Aorta (tissue), 5 donors: ENCODE measurements at regions of chr4 and their contacts with region 1.

Region 1: GRCh38 chr4:122827879-122828601 is 1.4 kb downstream of the FGF2 start:
- DNase-seq: peak in 1 of 2 donors; percentile 55
- ATAC-seq: peak; percentile 68
- H3K4me3 ChIP-seq: peak overlapping the region; percentile 83 to 94
- H3K27ac ChIP-seq: peak overlapping the region in 1 of 2 donors; percentile 80
- H3K4me1 ChIP-seq: peaks cover 5 to 11% of the 10 kb centered on the region in 2 donors
- H3K27me3 ChIP-seq: no peaks in the 10 kb centered on the region

Region 2: DNA sequence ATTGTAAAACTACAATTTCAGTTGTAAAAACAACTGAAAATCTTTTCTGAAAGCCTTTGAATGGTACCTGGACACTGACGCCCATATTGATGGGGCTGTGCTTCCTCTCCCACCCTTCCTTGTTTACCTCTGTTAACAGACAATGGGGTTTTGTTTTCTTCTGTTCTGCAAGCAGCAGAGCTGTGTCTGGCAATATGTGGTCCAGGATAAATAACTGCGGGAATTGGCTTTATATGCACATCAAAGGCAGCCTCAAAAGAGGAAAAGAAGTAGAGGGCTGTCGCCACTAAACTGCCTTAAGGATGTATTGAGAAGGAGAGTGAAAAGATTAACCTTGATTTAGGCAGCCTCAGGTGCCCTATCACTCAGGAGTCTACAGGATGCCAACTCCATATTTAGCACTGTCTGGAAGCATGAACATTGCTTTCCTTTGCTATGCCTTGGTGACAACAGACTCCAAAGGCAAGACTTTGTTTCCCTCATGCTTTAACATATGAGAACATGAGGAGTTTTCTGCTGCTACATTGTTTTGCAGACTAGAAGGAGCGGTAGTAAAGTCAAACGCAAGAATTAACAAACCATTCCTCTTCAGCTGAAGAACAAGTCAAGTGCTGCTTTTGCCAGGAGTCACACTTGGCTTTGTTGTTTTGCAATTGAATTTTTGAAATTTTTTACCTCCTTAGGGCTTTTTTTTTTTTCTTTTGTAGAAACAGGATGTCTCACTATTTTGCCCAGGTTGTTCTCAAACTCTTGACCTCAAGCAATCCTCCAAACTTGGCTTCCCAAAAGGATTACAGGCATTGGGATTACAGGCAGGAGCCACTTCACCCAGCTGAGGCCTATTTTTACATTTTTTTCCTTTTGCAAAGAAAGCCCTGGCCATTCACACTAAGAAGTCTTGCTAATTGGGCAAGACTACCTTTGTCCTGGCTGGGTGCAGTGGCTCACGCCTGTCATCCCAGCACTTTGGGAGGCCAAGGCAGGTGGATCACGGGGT is 210.1 kb before region 1 on chr4:
- intact Hi-C with region 1: no loop called
- DNase-seq: no peak
- ATAC-seq: no peak
- H3K4me3 ChIP-seq: no peak overlapping the region
- H3K27ac ChIP-seq: no peak overlapping the region
- H3K4me1 ChIP-seq: peaks cover 0 to 3% of the 10 kb centered on the region in 2 donors
- H3K27me3 ChIP-seq: no peaks in the 10 kb centered on the region

Region 3: GRCh38 chr4:122666527-122667245 is 161.4 kb before region 1 on chr4:
- intact Hi-C with region 1: loop called in 1 of 2 experiments (anchors 10 kb)
- DNase-seq: no peak
- ATAC-seq: no peak
- H3K4me3 ChIP-seq: no peak overlapping the region
- H3K27ac ChIP-seq: peak overlapping the region in 1 of 2 donors; percentile 86
- H3K4me1 ChIP-seq: peaks cover under 1 to 8% of the 10 kb centered on the region in 2 donors
- H3K27me3 ChIP-seq: no peaks in the 10 kb centered on the region

Region 4: DNA sequence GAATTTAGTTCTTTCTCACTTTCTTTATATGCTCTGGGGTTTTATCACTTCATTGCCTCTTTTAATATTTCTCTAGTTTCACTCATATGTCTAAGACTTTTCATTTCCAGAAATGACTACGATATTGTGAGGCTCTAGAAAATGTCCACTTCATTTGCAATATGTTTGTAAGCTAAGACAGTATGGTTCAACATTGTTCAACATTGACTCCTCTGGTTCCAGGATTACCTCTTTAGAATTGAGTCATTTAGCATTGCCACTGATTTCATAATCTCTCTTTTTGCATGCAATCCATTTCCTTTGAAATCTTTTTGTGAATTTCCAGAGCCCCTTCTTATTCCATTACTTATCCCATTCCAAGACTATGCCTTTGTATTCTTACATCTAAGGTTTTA is 63.2 kb before region 1 on chr4:
- intact Hi-C with region 1: loop called (anchors 2 to 5 kb)
- DNase-seq: no peak
- ATAC-seq: no peak
- H3K4me3 ChIP-seq: no peak overlapping the region
- H3K27ac ChIP-seq: no peak overlapping the region
- H3K4me1 ChIP-seq: peaks cover 0 to 2% of the 10 kb centered on the region in 2 donors
- H3K27me3 ChIP-seq: no peaks in the 10 kb centered on the region

Region 5: GRCh38 chr4:122898370-122899150 is 70.5 kb after region 1 on chr4:
- intact Hi-C with region 1: loop called (anchors 5 kb)
- DNase-seq: no peak
- ATAC-seq: peak; percentile 80
- H3K4me3 ChIP-seq: no peak overlapping the region
- H3K27ac ChIP-seq: peak overlapping the region; percentile 76 to 88
- H3K4me1 ChIP-seq: peaks cover 1 to 7% of the 10 kb centered on the region in 2 donors
- H3K27me3 ChIP-seq: no peaks in the 10 kb centered on the region

Region 6: GRCh38 chr4:122922877-122923511 is 95.0 kb after region 1 on chr4:
- intact Hi-C with region 1: loop called in 1 of 2 experiments (anchors 1 kb)
- DNase-seq: peak; percentile 91 to 93
- ATAC-seq: peak; percentile 95
- H3K4me3 ChIP-seq: peak overlapping the region; percentile 71 to 73
- H3K27ac ChIP-seq: peak overlapping the region in 1 of 2 donors; percentile 68
- H3K4me1 ChIP-seq: peaks cover 0 to 1% of the 10 kb centered on the region in 2 donors
- H3K27me3 ChIP-seq: no peaks in the 10 kb centered on the region